ENCODE measurements at regions of chr22 and their contacts with region 1.

Region 1: DNA sequence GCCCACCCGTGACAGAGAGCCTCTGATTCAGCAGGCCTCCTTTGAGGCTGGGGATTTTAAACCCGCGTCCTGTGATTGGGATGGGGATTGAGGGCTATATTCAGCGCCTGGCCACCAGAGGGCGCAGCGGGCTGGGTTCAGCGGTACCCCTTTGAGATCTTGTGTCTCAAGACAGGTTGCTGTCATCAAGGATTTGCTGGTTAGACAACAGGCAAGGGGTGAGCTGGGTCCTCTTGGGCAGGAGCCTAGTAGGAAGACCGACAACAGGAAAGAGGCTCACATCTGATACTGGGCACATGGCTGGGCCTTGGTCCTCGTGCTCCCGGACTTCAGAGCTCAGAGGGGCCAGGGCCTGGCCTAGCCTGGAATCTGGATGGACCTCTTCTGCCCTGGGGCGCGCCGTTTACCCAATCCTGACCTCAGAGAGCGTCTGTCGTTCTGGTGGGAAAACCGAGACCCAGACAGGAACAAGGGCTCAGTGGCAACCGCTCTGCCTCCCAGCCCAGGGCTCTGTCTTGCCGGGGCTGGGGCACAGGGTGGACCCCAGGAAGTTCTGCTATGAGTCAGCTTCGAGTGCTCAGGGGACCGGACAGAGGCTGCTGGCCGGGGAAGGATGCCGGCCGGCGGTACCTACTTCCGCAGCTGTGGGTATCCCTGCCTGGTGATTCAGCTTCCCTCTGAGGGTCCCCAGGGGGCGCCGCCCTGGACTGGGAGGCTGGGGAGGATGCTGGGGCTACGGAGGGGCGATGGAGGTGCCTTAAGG is 929 bp upstream of the SLC35E4 start:
- DNase-seq: peak; percentile 89
- H3K4me3 ChIP-seq: peak overlapping the region; percentile 74
- H3K27ac ChIP-seq: peak overlapping the region; percentile 32
- H3K4me1 ChIP-seq: peaks cover 16% of the 10 kb centered on the region
- CTCF ChIP-seq: peak; percentile 94

Region 2: GRCh38 chr22:30262917-30263741 is 371.5 kb before region 1 on chr22:
- CTCF ChIA-PET with region 1: interaction called, 14 read pairs
- POLR2A ChIA-PET with region 1: no interaction called
- intact Hi-C with region 1: no loop called
- DNase-seq: peak; percentile 80
- H3K4me3 ChIP-seq: no peak overlapping the region
- H3K27ac ChIP-seq: no peak overlapping the region
- H3K4me1 ChIP-seq: peaks cover 20% of the 10 kb centered on the region
- CTCF ChIP-seq: peak; percentile 96

Region 3: GRCh38 chr22:30386960-30387827 is 247.5 kb before region 1 on chr22 and contains the start of gene RNF215:
- CTCF ChIA-PET with region 1: no interaction called
- POLR2A ChIA-PET with region 1: no interaction called
- intact Hi-C with region 1: no loop called
- DNase-seq: peak; percentile 86
- H3K4me3 ChIP-seq: peak within 1 kb of the TSS; percentile 66
- H3K27ac ChIP-seq: no peak within 1 kb of the TSS
- H3K4me1 ChIP-seq: peaks cover 23% of the 10 kb centered on the region
- CTCF ChIP-seq: peak; percentile 82
- total RNA-seq, gene RNF215: 6.9 and 8.0 TPM in 2 replicates

Region 4: GRCh38 chr22:30453731-30454510 is 180.7 kb before region 1 on chr22:
- CTCF ChIA-PET with region 1: no interaction called
- POLR2A ChIA-PET with region 1: no interaction called
- intact Hi-C with region 1: no loop called
- DNase-seq: no peak
- H3K4me3 ChIP-seq: no peak overlapping the region
- H3K27ac ChIP-seq: no peak overlapping the region
- H3K4me1 ChIP-seq: no peaks in the 10 kb centered on the region
- CTCF ChIP-seq: 0 out of 2 replicates have a peak, but pooled peaks have one; percentile 20

Region 5: GRCh38 chr22:30503551-30503950 is 131.1 kb before region 1 on chr22:
- CTCF ChIA-PET with region 1: no interaction called
- POLR2A ChIA-PET with region 1: no interaction called
- intact Hi-C with region 1: no loop called
- DNase-seq: no peak
- H3K4me3 ChIP-seq: no peak overlapping the region
- H3K27ac ChIP-seq: no peak overlapping the region
- H3K4me1 ChIP-seq: no peaks in the 10 kb centered on the region
- CTCF ChIP-seq: no peak

Region 6: DNA sequence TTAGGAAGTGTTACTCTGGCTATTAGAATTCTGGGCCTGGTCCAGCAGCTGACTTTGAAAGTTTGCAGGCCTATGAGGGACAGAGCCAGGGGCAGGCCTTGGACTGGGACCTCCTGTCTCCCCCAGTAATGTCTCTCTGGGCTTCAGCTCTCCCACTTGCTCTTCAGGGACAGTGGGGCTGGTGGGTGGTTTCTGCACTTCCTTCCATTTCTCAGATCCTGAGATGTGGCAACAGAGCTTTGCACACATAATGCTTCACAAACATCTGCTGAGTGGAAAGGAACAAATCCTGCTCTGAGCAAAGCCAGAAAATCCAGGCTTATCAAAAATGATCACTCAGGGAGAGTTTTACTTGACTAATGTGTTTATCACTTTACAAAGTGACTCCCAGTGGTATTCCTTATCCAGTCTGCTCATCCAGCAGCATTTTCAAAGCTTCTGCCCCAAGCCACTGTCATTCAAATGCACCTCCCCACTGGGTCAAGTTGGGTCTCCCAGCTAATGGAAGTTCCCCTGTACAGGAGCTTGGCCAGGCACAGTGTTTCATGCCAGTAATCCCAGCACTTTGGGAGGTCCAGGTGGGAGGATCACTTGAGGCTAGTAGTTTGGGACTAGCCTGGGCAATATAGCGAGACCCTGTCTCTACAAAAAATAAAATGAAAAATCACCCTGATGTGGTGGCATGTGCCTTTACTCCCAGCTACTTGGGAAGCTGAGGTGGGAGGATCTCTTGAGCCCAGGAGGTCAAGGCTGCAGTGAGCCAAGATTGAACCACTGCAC is 46.5 kb after region 1 on chr22:
- CTCF ChIA-PET with region 1: no interaction called
- POLR2A ChIA-PET with region 1: no interaction called
- intact Hi-C with region 1: no loop called
- DNase-seq: no peak
- H3K4me3 ChIP-seq: no peak overlapping the region
- H3K27ac ChIP-seq: no peak overlapping the region
- H3K4me1 ChIP-seq: no peaks in the 10 kb centered on the region
- CTCF ChIP-seq: no peak

Region 7: GRCh38 chr22:30754971-30755756 is 120.5 kb after region 1 on chr22:
- CTCF ChIA-PET with region 1: interaction called, 6 read pairs
- POLR2A ChIA-PET with region 1: interaction called, 3 read pairs
- intact Hi-C with region 1: loop called (anchors 1 kb)
- DNase-seq: peak; percentile 38
- H3K4me3 ChIP-seq: no peak overlapping the region
- H3K27ac ChIP-seq: no peak overlapping the region
- H3K4me1 ChIP-seq: no peaks in the 10 kb centered on the region
- CTCF ChIP-seq: peak; percentile 68

Region 8: DNA sequence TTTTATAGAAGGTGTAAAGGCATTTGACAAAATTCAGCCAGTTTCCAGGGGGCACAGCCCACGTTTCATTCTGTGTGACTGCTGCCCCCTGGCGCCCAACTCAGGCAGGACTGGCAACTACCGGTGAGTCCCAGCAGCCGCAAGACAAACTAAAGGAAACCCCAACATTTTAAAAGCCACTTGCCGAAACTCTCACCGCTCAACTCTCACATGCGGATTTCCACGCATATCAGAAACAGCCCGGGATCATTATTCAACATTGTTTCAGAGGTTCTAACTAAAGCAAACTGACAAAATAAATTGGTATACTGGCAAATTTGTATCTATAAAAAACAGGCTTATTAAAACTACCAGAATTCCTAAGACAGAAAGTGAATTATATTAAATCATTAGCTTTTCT is 285.8 kb after region 1 on chr22:
- CTCF ChIA-PET with region 1: no interaction called
- POLR2A ChIA-PET with region 1: no interaction called
- intact Hi-C with region 1: loop called (anchors 1 kb)
- DNase-seq: peak; percentile 82
- H3K4me3 ChIP-seq: peak overlapping the region; percentile 68
- H3K27ac ChIP-seq: no peak overlapping the region
- H3K4me1 ChIP-seq: peaks cover 12% of the 10 kb centered on the region
- CTCF ChIP-seq: peak; percentile 96